Transverse colon (tissue), 4 donors: ENCODE measurements at regions of chr13 and their contacts with region 1.

Region 1: GRCh38 chr13:113393563-113394338 is 29.8 kb upstream of the GRTP1 start:
- DNase-seq: peak; percentile 83
- H3K4me3 ChIP-seq: peak overlapping the region; percentile 52 to 85 (median 64)
- H3K27ac ChIP-seq: peak overlapping the region; percentile 46 to 76 (median 60)
- H3K4me1 ChIP-seq: peaks cover 6 to 25% (median 12%) of the 10 kb centered on the region in 4 donors
- H3K27me3 ChIP-seq: no peaks in the 10 kb centered on the region
- CTCF ChIP-seq: peak; percentile 33 to 95 (median 82)
- EP300 ChIP-seq: no peak
- POLR2A ChIP-seq: no peak

Region 2: DNA sequence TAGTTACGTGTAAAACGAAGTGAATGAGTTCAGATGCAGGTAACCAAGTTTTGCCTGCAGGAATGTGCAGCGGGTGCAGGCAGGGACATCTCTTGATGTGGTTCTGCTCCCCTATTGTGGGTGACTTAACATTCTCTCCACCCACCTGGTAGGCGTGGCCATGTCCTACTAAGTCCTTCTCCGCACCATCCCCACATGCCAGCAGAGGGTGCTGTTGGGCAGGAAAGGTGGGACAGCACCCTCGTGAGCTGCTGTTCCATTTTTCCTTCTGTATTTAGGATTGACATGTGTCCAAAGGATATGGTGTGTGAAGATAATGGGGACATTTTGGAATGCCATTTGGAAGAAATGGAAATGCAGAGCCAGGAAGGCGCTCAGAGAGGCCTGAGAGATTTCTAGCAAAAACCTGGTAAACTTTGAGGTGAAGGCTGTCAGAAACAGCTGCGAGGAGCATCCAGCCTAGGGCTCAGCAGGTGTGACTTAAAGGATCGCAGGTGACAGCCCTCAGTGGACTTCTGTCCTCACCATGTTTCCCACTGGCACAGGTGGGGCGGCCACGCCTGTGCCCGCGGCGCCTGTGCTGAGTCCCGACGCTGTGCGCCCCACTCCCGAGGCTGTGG is 451.0 kb before region 1 on chr13:
- in situ Hi-C with region 1: loop called in 3 of 4 experiments (anchors 25 kb)
- intact Hi-C with region 1: no loop called
- DNase-seq: peak; percentile 99
- H3K4me3 ChIP-seq: peak overlapping the region; percentile 29 to 61 (median 46)
- H3K27ac ChIP-seq: peak overlapping the region in 3 of 4 donors; percentile 17 to 69 (median 41)
- H3K4me1 ChIP-seq: peaks cover 0 to 14% (median 11%) of the 10 kb centered on the region in 4 donors
- H3K27me3 ChIP-seq: no peaks in the 10 kb centered on the region
- CTCF ChIP-seq: peak; percentile 92 to 96 (median 94)
- EP300 ChIP-seq: no peak
- POLR2A ChIP-seq: no peak

Region 3: DNA sequence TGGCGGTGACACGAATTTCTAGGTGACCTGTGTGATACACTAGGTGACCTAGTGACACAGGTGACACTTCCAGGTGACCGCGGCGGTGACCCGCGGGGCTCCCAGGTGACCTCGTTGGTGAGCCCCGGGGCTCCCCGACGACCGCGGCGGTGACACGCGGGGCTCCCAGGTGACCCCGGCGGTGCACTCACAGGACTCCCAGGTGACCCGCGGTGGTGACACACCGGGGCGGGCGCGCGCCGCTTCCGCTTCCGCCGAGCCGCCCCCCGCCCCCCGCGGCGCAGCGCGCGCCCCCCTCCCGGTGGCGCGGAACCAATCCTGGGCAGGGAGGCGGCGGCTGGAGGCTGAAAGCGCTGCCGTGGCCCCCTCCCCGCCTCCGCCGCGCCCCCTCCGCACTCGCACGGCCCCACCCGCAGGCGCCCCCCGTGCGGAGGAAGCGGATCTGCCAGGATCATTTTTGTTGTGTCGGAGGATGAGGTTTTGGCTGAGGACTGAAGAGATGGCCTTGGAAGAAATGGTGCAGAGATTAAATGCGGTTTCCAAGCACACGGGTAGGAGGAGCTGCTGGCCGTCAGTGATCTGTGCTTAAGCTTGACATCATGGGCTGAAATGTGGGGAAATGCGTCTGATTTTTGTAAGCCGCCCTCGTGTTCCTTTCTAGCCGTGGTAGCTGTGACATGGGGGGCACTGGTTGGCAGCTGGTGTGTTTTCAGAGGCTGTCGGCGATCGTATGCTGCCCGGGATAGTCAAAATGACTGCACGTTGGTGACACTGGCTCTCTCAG is 424.7 kb before region 1 on chr13 and contains the start of gene MCF2L:
- in situ Hi-C with region 1: loop called in 1 of 4 experiments (anchors 25 kb)
- intact Hi-C with region 1: no loop called
- DNase-seq: peak; percentile 55
- H3K4me3 ChIP-seq: peak within 1 kb of the TSS; percentile 38 to 55 (median 46)
- H3K27ac ChIP-seq: peak within 1 kb of the TSS; percentile 69 to 88 (median 78)
- H3K4me1 ChIP-seq: peaks cover 0 to 18% (median 7%) of the 10 kb centered on the region in 4 donors
- H3K27me3 ChIP-seq: peaks cover 32% of the 10 kb centered on the region
- CTCF ChIP-seq: peak in 2 of 5 experiments; percentile 34 to 55
- EP300 ChIP-seq: no peak
- POLR2A ChIP-seq: no peak
- total RNA-seq, gene MCF2L: 62.1 to 186 (median 91.3) TPM

Region 4: DNA sequence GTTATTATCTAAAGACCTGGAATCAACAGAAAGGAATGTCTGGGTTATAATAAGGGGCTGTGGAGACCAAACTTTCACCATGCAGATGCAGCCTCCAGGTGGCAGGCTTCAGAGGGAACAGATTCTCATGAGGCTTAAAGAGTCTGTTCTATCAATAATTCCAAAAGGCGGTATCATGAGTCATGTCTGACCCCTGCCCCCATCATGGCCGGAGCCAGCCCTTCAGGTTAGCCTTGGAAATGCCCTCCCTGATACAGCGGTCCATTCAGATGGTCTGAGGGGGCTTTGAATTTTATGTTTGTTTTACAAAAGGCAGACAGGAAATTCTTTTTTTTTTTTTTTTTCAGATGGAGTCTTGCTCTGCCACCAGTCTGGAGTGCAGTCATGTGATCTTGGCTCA is 118.4 kb before region 1 on chr13:
- in situ Hi-C with region 1: loop called in 2 of 4 experiments (anchors 10 to 25 kb)
- intact Hi-C with region 1: no loop called
- DNase-seq: peak; percentile 43
- H3K4me3 ChIP-seq: no peak overlapping the region
- H3K27ac ChIP-seq: no peak overlapping the region
- H3K4me1 ChIP-seq: peaks cover 0 to 4% (median 0%) of the 10 kb centered on the region in 4 donors
- H3K27me3 ChIP-seq: no peaks in the 10 kb centered on the region
- CTCF ChIP-seq: peak; percentile 40 to 62 (median 46)
- EP300 ChIP-seq: no peak
- POLR2A ChIP-seq: no peak

Region 5: GRCh38 chr13:113296842-113297369 is 96.8 kb before region 1 on chr13 and contains the start of gene LAMP1:
- in situ Hi-C with region 1: loop called in 1 of 4 experiments (anchors 25 kb)
- intact Hi-C with region 1: no loop called
- DNase-seq: peak; percentile 98
- H3K4me3 ChIP-seq: peak within 1 kb of the TSS; percentile 87 to 98 (median 92)
- H3K27ac ChIP-seq: peak within 1 kb of the TSS; percentile 83 to 92 (median 90)
- H3K4me1 ChIP-seq: peaks cover 3 to 29% (median 15%) of the 10 kb centered on the region in 4 donors
- H3K27me3 ChIP-seq: peaks cover 9% of the 10 kb centered on the region
- CTCF ChIP-seq: peak in 1 of 5 experiments; percentile 29
- EP300 ChIP-seq: peak; percentile 91
- POLR2A ChIP-seq: peak; percentile 66
- total RNA-seq, gene LAMP1: 69.5 to 149 (median 103) TPM